ENCODE measurements at regions of chr11 and their contacts with region 1.

Region 1: DNA sequence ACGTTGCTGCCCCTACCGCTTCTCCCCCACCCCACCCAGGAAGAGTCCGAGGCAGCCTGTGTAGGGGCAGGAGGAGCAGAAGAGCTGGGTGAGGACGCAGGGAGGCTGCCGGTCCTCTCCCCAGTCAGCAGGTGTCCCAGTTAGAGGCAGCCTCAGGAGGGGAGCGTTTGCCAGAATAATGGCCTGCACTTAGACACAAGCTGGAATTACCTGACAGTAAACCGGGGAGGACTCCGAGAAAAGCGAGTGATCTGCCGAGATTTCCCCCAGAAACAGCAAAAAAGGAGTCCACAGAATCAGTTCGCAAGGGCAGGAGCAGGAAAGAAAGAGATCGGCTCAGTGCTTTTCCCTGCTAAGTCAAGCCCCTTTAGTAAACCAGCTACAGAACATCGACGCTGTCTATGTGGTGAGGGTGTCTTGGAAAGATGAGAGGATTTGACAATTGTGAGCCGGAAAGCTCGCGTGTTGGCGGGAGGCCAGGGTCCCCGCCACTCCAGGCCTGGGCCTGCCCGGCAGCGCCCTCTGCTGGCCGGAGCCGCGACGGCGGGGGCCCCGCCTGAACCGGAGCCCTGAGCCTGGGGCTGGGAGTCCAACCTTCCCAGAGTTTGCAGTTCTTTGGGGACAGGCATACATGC is 17.7 kb upstream of the THRSP start:
- DNase-seq: peak; percentile 77 to 92 (median 85)
- ATAC-seq: peak; percentile 70 to 95 (median 88)
- H3K4me3 ChIP-seq: peak overlapping the region; percentile 27 to 64 (median 54)
- H3K27ac ChIP-seq: peak overlapping the region in 8 of 12 donors; percentile 15 to 76 (median 52)
- H3K4me1 ChIP-seq: peaks cover 0 to 13% (median 6%) of the 10 kb centered on the region in 12 donors
- H3K27me3 ChIP-seq: no peaks in the 10 kb centered on the region
- CTCF ChIP-seq: peak; percentile 97 to 100 (median 99)
- POLR2A ChIP-seq: no peak

Region 2: GRCh38 chr11:77994412-77995362 is 51.3 kb before region 1 on chr11 and contains the start of gene INTS4:
- intact Hi-C with region 1: loop called in 2 of 10 experiments (anchors 5 to 10 kb)
- DNase-seq: peak; percentile 99 to 100 (median 99)
- ATAC-seq: peak; percentile 99
- H3K4me3 ChIP-seq: peak within 1 kb of the TSS; percentile 35 to 91 (median 72)
- H3K27ac ChIP-seq: peak within 1 kb of the TSS in 11 of 12 donors; percentile 73 to 92 (median 84)
- H3K4me1 ChIP-seq: peaks cover 0 to 27% (median 17%) of the 10 kb centered on the region in 12 donors
- H3K27me3 ChIP-seq: no peaks in the 10 kb centered on the region
- CTCF ChIP-seq: no peak
- POLR2A ChIP-seq: peak; percentile 11 to 59
- total RNA-seq, gene INTS4: 11.6 to 23.9 (median 15.6) TPM

Region 3: DNA sequence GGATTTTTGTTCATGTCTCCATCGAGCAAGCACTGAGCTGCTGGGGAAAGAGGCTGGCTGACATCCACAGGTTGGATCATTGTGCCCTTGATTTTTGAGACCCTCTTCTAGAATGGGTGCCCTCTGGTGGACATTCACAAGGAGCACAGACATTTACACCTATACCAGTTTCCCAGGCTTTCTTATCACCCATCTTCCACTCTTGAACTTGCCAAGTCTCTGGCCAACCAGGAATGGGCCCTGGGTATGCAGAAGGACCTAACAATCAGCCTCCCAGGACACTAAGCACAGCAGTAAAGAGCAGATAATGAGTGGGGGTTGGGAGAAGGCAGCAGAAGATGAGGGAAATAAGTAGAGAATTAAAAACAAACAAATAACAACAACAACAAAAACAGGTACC is 45.8 kb before region 1 on chr11:
- intact Hi-C with region 1: loop called in 4 of 10 experiments (anchors 5 to 10 kb)
- DNase-seq: peak in 1 of 5 donors; percentile 29
- ATAC-seq: peak in 3 of 4 donors; percentile 48 to 73 (median 70)
- H3K4me3 ChIP-seq: no peak overlapping the region
- H3K27ac ChIP-seq: no peak overlapping the region
- H3K4me1 ChIP-seq: peaks cover 0 to 5% (median 3%) of the 10 kb centered on the region in 12 donors
- H3K27me3 ChIP-seq: peaks cover 0 to 5% (median 0%) of the 10 kb centered on the region in 9 donors
- CTCF ChIP-seq: peak; percentile 43 to 66 (median 48)
- POLR2A ChIP-seq: no peak